CD8-positive, alpha-beta T cell (primary cell): ENCODE measurements at regions of chr10 and their contacts with region 1.

Region 1: GRCh38 chr10:102132563-102133372 is at the start of gene PPRC1:
- DNase-seq: peak; percentile 91 to 99 (median 96)
- ATAC-seq: peak; percentile 93
- H3K4me3 ChIP-seq: peak within 1 kb of the TSS; percentile 79 to 96
- H3K4me3 Mint-ChIP-seq: peak within 1 kb of the TSS; percentile 96
- H3K27ac ChIP-seq: peak within 1 kb of the TSS; percentile 75 to 92
- H3K27ac Mint-ChIP-seq: peak within 1 kb of the TSS; percentile 95
- H3K4me1 ChIP-seq: peaks cover 26% of the 10 kb centered on the region
- H3K4me1 Mint-ChIP-seq: peaks cover 40% of the 10 kb centered on the region
- H3K27me3 ChIP-seq: no peaks in the 10 kb centered on the region
- H3K27me3 Mint-ChIP-seq: no peaks in the 10 kb centered on the region
- CTCF ChIP-seq: peak; percentile 96
- total RNA-seq, gene PPRC1: 35.2 to 38.5 TPM

Region 2: GRCh38 chr10:101818119-101818871 is 314.5 kb before region 1 on chr10 and contains the start of gene OGA:
- CTCF ChIA-PET with region 1: no interaction called
- POLR2A ChIA-PET with region 1: no interaction called
- intact Hi-C with region 1: loop called in 1 of 2 experiments (anchors 1 kb)
- DNase-seq: peak; percentile 94 to 100 (median 98)
- ATAC-seq: peak; percentile 90
- H3K4me3 ChIP-seq: peak within 1 kb of the TSS; percentile 78 to 82
- H3K4me3 Mint-ChIP-seq: peak within 1 kb of the TSS; percentile 98
- H3K27ac ChIP-seq: peak within 1 kb of the TSS; percentile 81 to 90
- H3K27ac Mint-ChIP-seq: peak within 1 kb of the TSS; percentile 97
- H3K4me1 ChIP-seq: peaks cover 32% of the 10 kb centered on the region
- H3K4me1 Mint-ChIP-seq: peaks cover 51% of the 10 kb centered on the region
- H3K27me3 ChIP-seq: no peaks in the 10 kb centered on the region
- H3K27me3 Mint-ChIP-seq: no peaks in the 10 kb centered on the region
- CTCF ChIP-seq: no peak
- total RNA-seq, gene OGA: 356 to 394 TPM

Region 3: GRCh38 chr10:102055647-102056419 is 76.9 kb before region 1 on chr10 and contains the start of gene ARMH3:
- CTCF ChIA-PET with region 1: no interaction called
- POLR2A ChIA-PET with region 1: no interaction called
- intact Hi-C with region 1: loop called (anchors 1 to 2 kb)
- DNase-seq: peak; percentile 75 to 95 (median 87)
- ATAC-seq: peak; percentile 93
- H3K4me3 ChIP-seq: peak within 1 kb of the TSS; percentile 93 to 94
- H3K4me3 Mint-ChIP-seq: peak within 1 kb of the TSS; percentile 97
- H3K27ac ChIP-seq: peak within 1 kb of the TSS; percentile 79 to 90
- H3K27ac Mint-ChIP-seq: peak within 1 kb of the TSS; percentile 95
- H3K4me1 ChIP-seq: peaks cover 40% of the 10 kb centered on the region
- H3K4me1 Mint-ChIP-seq: peaks cover 42% of the 10 kb centered on the region
- H3K27me3 ChIP-seq: no peaks in the 10 kb centered on the region
- H3K27me3 Mint-ChIP-seq: no peaks in the 10 kb centered on the region
- CTCF ChIP-seq: no peak
- total RNA-seq, gene ARMH3: 18.6 to 20.6 TPM

Region 4: GRCh38 chr10:102114861-102115618 is 17.7 kb before region 1 on chr10:
- CTCF ChIA-PET with region 1: interaction called, 22 read pairs
- POLR2A ChIA-PET with region 1: interaction called, 7 read pairs
- intact Hi-C with region 1: loop called (anchors 1 kb)
- DNase-seq: peak; percentile 62 to 90 (median 84)
- ATAC-seq: peak; percentile 69
- H3K4me3 ChIP-seq: peak overlapping the region; percentile 57 to 75
- H3K4me3 Mint-ChIP-seq: peak overlapping the region; percentile 91
- H3K27ac ChIP-seq: peak overlapping the region; percentile 56 to 97
- H3K27ac Mint-ChIP-seq: peak overlapping the region; percentile 93
- H3K4me1 ChIP-seq: peaks cover 63% of the 10 kb centered on the region
- H3K4me1 Mint-ChIP-seq: peaks cover 71% of the 10 kb centered on the region
- H3K27me3 ChIP-seq: no peaks in the 10 kb centered on the region
- H3K27me3 Mint-ChIP-seq: no peaks in the 10 kb centered on the region
- CTCF ChIP-seq: no peak

Region 5: GRCh38 chr10:102167861-102168260 is 35.1 kb after region 1 on chr10:
- CTCF ChIA-PET with region 1: interaction called, 4 read pairs
- POLR2A ChIA-PET with region 1: no interaction called
- intact Hi-C with region 1: loop called in 1 of 2 experiments (anchors 1 kb)
- DNase-seq: no peak
- ATAC-seq: no peak
- H3K4me3 ChIP-seq: no peak overlapping the region
- H3K4me3 Mint-ChIP-seq: no peak overlapping the region
- H3K27ac ChIP-seq: no peak overlapping the region
- H3K27ac Mint-ChIP-seq: no peak overlapping the region
- H3K4me1 ChIP-seq: peaks cover 4% of the 10 kb centered on the region
- H3K4me1 Mint-ChIP-seq: peaks cover 6% of the 10 kb centered on the region
- H3K27me3 ChIP-seq: peaks cover 0 to 3% of the 10 kb centered on the region in 2 experiments
- H3K27me3 Mint-ChIP-seq: no peaks in the 10 kb centered on the region
- CTCF ChIP-seq: no peak

Region 6: DNA sequence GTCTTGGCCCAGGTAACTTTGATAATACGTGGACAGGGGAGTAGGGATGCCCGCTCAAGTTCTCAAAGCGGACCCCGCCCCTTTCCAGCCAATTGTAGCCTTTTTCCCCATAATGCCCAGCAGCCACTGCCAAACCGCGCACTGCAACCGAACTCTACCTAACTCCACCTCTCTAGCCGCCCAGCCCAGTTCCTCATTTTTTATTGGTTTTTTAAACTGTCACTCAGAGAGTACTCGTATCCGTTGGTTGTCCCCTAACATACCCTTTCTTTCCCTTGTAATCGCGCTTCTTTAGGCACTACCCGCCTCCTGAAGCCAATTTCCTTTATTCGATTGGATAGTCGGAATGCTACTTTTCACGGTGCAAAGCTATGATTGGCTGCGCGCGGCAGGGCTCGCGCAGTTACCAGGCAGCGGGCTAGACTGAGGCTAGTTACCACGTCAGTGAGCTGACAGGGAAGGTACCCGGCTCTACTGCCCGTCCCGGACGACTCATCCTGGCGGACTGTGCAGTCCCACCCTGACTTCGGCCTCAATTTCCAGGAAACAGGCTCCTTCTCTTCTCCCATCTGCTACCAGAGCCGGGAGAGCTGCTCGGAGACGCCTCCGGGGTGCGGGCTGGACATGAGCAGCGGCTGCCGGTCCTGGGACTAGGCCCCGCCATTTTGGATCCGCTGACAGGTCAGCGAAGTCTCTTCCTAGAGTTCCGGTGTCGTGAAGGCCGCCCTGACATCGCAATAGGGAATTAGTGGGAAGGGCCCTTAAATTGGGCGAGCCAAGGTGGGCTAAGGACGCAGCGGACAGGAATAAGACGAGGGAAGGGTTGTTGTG is 112.5 kb after region 1 on chr10 and contains the start of gene GBF1:
- CTCF ChIA-PET with region 1: no interaction called
- POLR2A ChIA-PET with region 1: no interaction called
- intact Hi-C with region 1: no loop called
- DNase-seq: peak; percentile 75 to 98 (median 87)
- ATAC-seq: peak; percentile 84
- H3K4me3 ChIP-seq: peak within 1 kb of the TSS; percentile 82 to 95
- H3K4me3 Mint-ChIP-seq: peak within 1 kb of the TSS; percentile 94
- H3K27ac ChIP-seq: peak within 1 kb of the TSS; percentile 89 to 93
- H3K27ac Mint-ChIP-seq: peak within 1 kb of the TSS; percentile 92
- H3K4me1 ChIP-seq: peaks cover 44% of the 10 kb centered on the region
- H3K4me1 Mint-ChIP-seq: peaks cover 54% of the 10 kb centered on the region
- H3K27me3 ChIP-seq: peaks cover 10 to 22% of the 10 kb centered on the region in 2 experiments
- H3K27me3 Mint-ChIP-seq: peaks cover 19% of the 10 kb centered on the region
- CTCF ChIP-seq: no peak
- total RNA-seq, gene GBF1: 26.7 to 31.3 TPM

Region 7: GRCh38 chr10:102420810-102421644 is 288.3 kb after region 1 on chr10 and contains the start of gene FBXL15:
- CTCF ChIA-PET with region 1: no interaction called
- POLR2A ChIA-PET with region 1: interaction called, 3 read pairs
- intact Hi-C with region 1: loop called in 1 of 2 experiments (anchors 5 kb)
- DNase-seq: peak; percentile 86 to 98 (median 95)
- ATAC-seq: peak; percentile 70
- H3K4me3 ChIP-seq: peak within 1 kb of the TSS; percentile 75 to 81
- H3K4me3 Mint-ChIP-seq: peak within 1 kb of the TSS; percentile 95
- H3K27ac ChIP-seq: peak within 1 kb of the TSS; percentile 79 to 82
- H3K27ac Mint-ChIP-seq: peak within 1 kb of the TSS; percentile 91
- H3K4me1 ChIP-seq: peaks cover 36% of the 10 kb centered on the region
- H3K4me1 Mint-ChIP-seq: peaks cover 39% of the 10 kb centered on the region
- H3K27me3 ChIP-seq: peaks cover 6 to 17% of the 10 kb centered on the region in 2 experiments
- H3K27me3 Mint-ChIP-seq: peaks cover 15% of the 10 kb centered on the region
- CTCF ChIP-seq: no peak
- total RNA-seq, gene FBXL15: 7.0 to 7.9 TPM

Region 8: DNA sequence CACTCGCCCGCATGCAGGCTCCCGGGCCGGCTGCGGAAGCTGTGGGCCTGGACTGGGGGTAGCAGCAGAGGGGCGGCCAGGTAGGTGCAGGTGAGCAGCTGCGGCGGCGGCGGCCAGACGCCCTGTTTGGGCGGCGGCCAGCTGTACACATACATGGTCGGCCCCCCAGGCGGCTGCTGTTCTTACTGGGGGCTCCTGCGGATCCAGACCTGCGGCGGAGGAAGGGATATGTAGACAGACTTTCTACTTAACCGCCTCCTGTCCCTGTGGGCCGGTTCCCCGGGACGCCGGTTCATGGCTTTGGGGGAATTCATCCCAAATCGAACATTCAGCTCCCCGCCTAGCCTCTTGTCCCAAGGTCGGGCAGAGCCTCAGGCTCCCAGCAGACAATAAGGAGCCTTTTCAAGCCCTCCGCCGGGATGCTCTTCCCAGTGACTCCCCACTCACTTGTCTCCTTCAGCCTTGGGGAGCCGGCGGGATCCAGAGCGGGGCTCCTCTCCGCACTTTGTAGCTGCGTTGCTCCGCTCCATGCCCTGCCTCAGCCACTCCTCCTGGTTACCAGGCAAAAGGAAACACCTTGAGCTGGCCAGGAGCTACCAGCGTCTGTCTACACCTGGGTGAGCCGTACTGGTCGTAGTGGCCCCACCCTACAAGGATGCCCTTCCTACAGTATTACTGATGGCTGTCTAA is 318.3 kb after region 1 on chr10 and contains the start of gene C10orf95:
- CTCF ChIA-PET with region 1: no interaction called
- POLR2A ChIA-PET with region 1: no interaction called
- intact Hi-C with region 1: no loop called
- DNase-seq: peak in 3 of 9 experiments; percentile 30 to 31 (median 30)
- ATAC-seq: no peak
- H3K4me3 ChIP-seq: peak within 1 kb of the TSS; percentile 54 to 73
- H3K4me3 Mint-ChIP-seq: peak within 1 kb of the TSS; percentile 92
- H3K27ac ChIP-seq: peak within 1 kb of the TSS; percentile 64 to 76
- H3K27ac Mint-ChIP-seq: peak within 1 kb of the TSS; percentile 79
- H3K4me1 ChIP-seq: peaks cover 16% of the 10 kb centered on the region
- H3K4me1 Mint-ChIP-seq: peaks cover 23% of the 10 kb centered on the region
- H3K27me3 ChIP-seq: no peaks in the 10 kb centered on the region
- H3K27me3 Mint-ChIP-seq: no peaks in the 10 kb centered on the region
- CTCF ChIP-seq: no peak
- total RNA-seq, gene C10orf95: 0.31 to 0.35 TPM

Region 9: GRCh38 chr10:102743588-102744373 is 611.0 kb after region 1 on chr10 and contains the start of gene WBP1L:
- CTCF ChIA-PET with region 1: no interaction called
- POLR2A ChIA-PET with region 1: no interaction called
- intact Hi-C with region 1: loop called in 1 of 2 experiments (anchors 1 kb)
- DNase-seq: peak; percentile 90 to 99 (median 95)
- ATAC-seq: peak; percentile 96
- H3K4me3 ChIP-seq: peak within 1 kb of the TSS; percentile 87 to 99
- H3K4me3 Mint-ChIP-seq: peak within 1 kb of the TSS; percentile 92
- H3K27ac ChIP-seq: peak within 1 kb of the TSS; percentile 64 to 91
- H3K27ac Mint-ChIP-seq: peak within 1 kb of the TSS; percentile 90
- H3K4me1 ChIP-seq: peaks cover 34% of the 10 kb centered on the region
- H3K4me1 Mint-ChIP-seq: peaks cover 50% of the 10 kb centered on the region
- H3K27me3 ChIP-seq: no peaks in the 10 kb centered on the region
- H3K27me3 Mint-ChIP-seq: no peaks in the 10 kb centered on the region
- CTCF ChIP-seq: no peak
- total RNA-seq, gene WBP1L: 5.5 to 5.9 TPM